ENCODE measurements at regions of chr3 and their contacts with region 1.

Region 1: GRCh38 chr3:54519493-54519892 is 397.1 kb downstream of the CACNA2D3 start:
- DNase-seq: no peak
- H3K4me3 Mint-ChIP-seq: no peak overlapping the region
- H3K27ac Mint-ChIP-seq: no peak overlapping the region
- H3K4me1 Mint-ChIP-seq: no peaks in the 10 kb centered on the region
- H3K27me3 Mint-ChIP-seq: no peaks in the 10 kb centered on the region

Region 2: DNA sequence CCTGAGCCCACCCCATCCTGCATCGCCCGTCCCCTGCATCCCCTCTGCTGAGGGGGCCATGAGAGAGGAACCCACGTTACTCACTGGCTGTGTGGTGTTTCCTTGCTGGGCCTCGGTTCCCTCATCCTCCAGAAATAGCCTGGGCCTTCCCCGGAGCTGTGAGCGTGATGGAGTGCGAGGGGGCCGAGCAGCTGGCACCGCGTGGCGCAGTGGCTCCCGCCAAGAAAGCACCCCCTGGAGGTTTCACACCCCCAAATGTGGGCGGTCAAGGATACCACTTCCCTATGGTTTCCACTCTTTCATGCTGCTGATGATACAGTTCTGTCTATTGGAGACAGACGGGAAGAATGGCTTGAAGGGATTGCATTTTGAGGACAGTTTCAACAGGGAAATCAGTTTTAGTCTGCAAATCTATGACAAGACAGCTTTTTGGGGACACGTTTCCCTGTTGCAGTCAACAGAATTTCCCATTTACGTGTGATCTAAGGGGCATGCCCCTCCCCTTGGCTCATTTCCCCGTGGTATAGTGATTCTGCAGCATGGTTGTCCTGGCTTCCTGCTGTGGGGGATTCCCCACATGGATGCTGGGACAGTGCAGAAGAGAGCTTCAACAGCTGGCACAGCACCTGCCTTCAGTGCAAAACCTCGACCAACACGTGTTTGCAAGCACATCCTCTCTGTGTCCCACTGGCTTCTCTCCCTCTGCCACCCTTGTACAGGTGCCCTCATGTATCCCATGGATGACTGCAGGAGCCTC is 30.9 kb after region 1 on chr3:
- intact Hi-C with region 1: loop called (anchors 1 kb)
- DNase-seq: no peak
- H3K4me3 Mint-ChIP-seq: no peak overlapping the region
- H3K27ac Mint-ChIP-seq: no peak overlapping the region
- H3K4me1 Mint-ChIP-seq: no peaks in the 10 kb centered on the region
- H3K27me3 Mint-ChIP-seq: no peaks in the 10 kb centered on the region

Region 3: GRCh38 chr3:54582424-54582823 is 62.9 kb after region 1 on chr3:
- intact Hi-C with region 1: no loop called
- DNase-seq: no peak
- H3K4me3 Mint-ChIP-seq: no peak overlapping the region
- H3K27ac Mint-ChIP-seq: no peak overlapping the region
- H3K4me1 Mint-ChIP-seq: no peaks in the 10 kb centered on the region
- H3K27me3 Mint-ChIP-seq: no peaks in the 10 kb centered on the region